Prostate gland (tissue), 2 donors: ENCODE measurements at regions of chr6 and their contacts with region 1.

Region 1: GRCh38 chr6:85945459-85946185 is 302.9 kb upstream of the SYNCRIP start:
- DNase-seq: no peak
- H3K4me3 ChIP-seq: no peak overlapping the region
- H3K27ac ChIP-seq: no peak overlapping the region
- H3K4me1 ChIP-seq: no peaks in the 10 kb centered on the region
- H3K27me3 ChIP-seq: no peaks in the 10 kb centered on the region
- CTCF ChIP-seq: no peak
- POLR2A ChIP-seq: no peak

Region 2: GRCh38 chr6:86070151-86070550 is 124.5 kb after region 1 on chr6:
- intact Hi-C with region 1: no loop called
- DNase-seq: no peak
- H3K4me3 ChIP-seq: no peak overlapping the region
- H3K27ac ChIP-seq: no peak overlapping the region
- H3K4me1 ChIP-seq: no peaks in the 10 kb centered on the region
- H3K27me3 ChIP-seq: no peaks in the 10 kb centered on the region
- CTCF ChIP-seq: no peak
- POLR2A ChIP-seq: no peak

Region 3: DNA sequence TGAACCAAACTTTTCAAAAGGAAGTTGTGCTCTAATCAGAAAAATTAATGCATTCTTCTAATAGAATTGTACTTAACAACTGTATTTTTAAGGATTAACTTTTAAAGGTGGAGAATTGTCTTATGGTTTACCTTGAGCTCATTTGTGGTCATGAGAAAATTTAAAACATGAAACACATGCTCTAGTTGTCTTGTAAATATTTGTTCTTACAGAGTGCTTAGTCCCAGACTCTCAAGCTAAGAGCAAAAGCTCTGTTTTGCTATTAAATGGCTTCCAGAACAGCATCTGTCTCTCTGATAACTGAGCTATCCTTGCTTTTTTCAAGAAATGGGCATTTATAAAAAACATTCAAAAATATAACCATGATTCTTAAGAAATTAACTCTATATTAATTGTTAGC is 209.2 kb after region 1 on chr6:
- intact Hi-C with region 1: loop called (anchors 10 kb)
- DNase-seq: no peak
- H3K4me3 ChIP-seq: no peak overlapping the region
- H3K27ac ChIP-seq: no peak overlapping the region
- H3K4me1 ChIP-seq: no peaks in the 10 kb centered on the region
- H3K27me3 ChIP-seq: no peaks in the 10 kb centered on the region
- CTCF ChIP-seq: no peak
- POLR2A ChIP-seq: no peak